CD8-positive, alpha-beta memory T cell (primary cell): ENCODE measurements at regions of chr15 and their contacts with region 1.

Region 1: DNA sequence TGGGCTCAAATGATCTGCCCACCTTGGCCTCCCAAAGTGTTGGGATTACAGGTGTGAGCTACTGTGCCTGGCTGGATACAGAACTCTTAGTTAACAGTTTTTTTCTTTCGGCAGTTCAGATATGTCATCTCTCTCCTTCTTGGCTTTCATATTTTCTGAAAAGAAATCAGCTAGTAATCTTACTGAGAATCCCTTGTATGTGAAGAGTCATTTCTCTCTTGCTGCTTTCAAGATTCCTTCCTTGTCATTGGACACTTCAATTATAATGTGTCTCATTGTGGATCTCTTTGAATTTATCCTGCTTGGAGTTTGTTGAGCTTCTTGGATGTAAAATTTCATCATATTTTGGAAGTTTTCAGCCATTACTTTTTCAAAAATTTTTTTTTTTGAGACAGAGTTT is 17.0 kb downstream of the TRIM69 start:
- DNase-seq: no peak
- H3K4me3 ChIP-seq: no peak overlapping the region
- H3K4me3 Mint-ChIP-seq: no peak overlapping the region
- H3K27ac ChIP-seq: no peak overlapping the region
- H3K27ac Mint-ChIP-seq: no peak overlapping the region
- H3K4me1 ChIP-seq: no peaks in the 10 kb centered on the region
- H3K4me1 Mint-ChIP-seq: peaks cover 6 to 19% (median 18%) of the 10 kb centered on the region in 3 donors
- H3K27me3 ChIP-seq: no peaks in the 10 kb centered on the region
- H3K27me3 Mint-ChIP-seq: peaks cover 0 to 2% of the 10 kb centered on the region in 2 donors

Region 2: GRCh38 chr15:44325568-44325967 is 427.8 kb before region 1 on chr15:
- CTCF ChIA-PET with region 1: no interaction called
- POLR2A ChIA-PET with region 1: no interaction called
- DNase-seq: no peak
- H3K4me3 ChIP-seq: no peak overlapping the region
- H3K4me3 Mint-ChIP-seq: no peak overlapping the region
- H3K27ac ChIP-seq: no peak overlapping the region
- H3K27ac Mint-ChIP-seq: peak overlapping the region in 1 of 8 donors; percentile 63
- H3K4me1 ChIP-seq: no peaks in the 10 kb centered on the region
- H3K4me1 Mint-ChIP-seq: peaks cover 11 to 21% (median 15%) of the 10 kb centered on the region in 3 donors
- H3K27me3 ChIP-seq: no peaks in the 10 kb centered on the region
- H3K27me3 Mint-ChIP-seq: no peaks in the 10 kb centered on the region

Region 3: GRCh38 chr15:44798826-44799225 is 45.5 kb after region 1 on chr15:
- CTCF ChIA-PET with region 1: no interaction called
- POLR2A ChIA-PET with region 1: interaction called, 13 read pairs
- DNase-seq: no peak
- H3K4me3 ChIP-seq: no peak overlapping the region
- H3K4me3 Mint-ChIP-seq: no peak overlapping the region
- H3K27ac ChIP-seq: no peak overlapping the region
- H3K27ac Mint-ChIP-seq: peak overlapping the region in 1 of 8 donors; percentile 26
- H3K4me1 ChIP-seq: no peaks in the 10 kb centered on the region
- H3K4me1 Mint-ChIP-seq: no peaks in the 10 kb centered on the region
- H3K27me3 ChIP-seq: no peaks in the 10 kb centered on the region
- H3K27me3 Mint-ChIP-seq: peaks cover 5 to 13% of the 10 kb centered on the region in 2 donors